Calu3 (cell line): ENCODE measurements at regions of chr1 and their contacts with region 1.

Region 1: GRCh38 chr1:229558571-229559335 is at the start of gene ABCB10:
- DNase-seq: peak; percentile 98
- H3K4me3 Mint-ChIP-seq: peak within 1 kb of the TSS; percentile 92
- H3K27ac Mint-ChIP-seq: peak within 1 kb of the TSS; percentile 66
- H3K4me1 Mint-ChIP-seq: peaks cover 23% of the 10 kb centered on the region
- H3K27me3 Mint-ChIP-seq: no peaks in the 10 kb centered on the region
- CTCF ChIP-seq: peak; percentile 87
- total RNA-seq, gene ABCB10: 18.5 and 19.9 TPM in 2 replicates

Region 2: DNA sequence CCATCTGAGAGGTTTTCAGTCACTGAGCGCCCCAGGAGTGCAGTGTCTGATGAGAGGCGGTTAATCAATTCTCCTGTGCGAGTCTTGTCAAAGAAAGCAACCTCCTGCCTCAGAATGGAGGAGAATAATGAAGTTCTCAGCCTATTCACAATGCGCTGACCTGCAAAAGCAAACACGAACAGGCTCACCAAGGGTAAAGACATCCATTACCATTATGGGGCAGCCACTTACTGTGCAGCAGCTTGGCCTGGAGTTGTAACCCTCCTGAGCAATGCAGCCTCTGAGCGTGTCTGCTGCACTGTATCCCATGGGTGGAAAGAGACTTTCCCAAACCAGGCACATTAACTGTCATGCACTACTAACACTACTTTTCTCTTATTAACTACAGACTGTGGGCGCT is 11.2 kb before region 1 on chr1:
- CTCF ChIA-PET with region 1: no interaction called
- intact Hi-C with region 1: no loop called
- DNase-seq: no peak
- H3K4me3 Mint-ChIP-seq: no peak overlapping the region
- H3K27ac Mint-ChIP-seq: no peak overlapping the region
- H3K4me1 Mint-ChIP-seq: no peaks in the 10 kb centered on the region
- H3K27me3 Mint-ChIP-seq: no peaks in the 10 kb centered on the region
- CTCF ChIP-seq: no peak

Region 3: DNA sequence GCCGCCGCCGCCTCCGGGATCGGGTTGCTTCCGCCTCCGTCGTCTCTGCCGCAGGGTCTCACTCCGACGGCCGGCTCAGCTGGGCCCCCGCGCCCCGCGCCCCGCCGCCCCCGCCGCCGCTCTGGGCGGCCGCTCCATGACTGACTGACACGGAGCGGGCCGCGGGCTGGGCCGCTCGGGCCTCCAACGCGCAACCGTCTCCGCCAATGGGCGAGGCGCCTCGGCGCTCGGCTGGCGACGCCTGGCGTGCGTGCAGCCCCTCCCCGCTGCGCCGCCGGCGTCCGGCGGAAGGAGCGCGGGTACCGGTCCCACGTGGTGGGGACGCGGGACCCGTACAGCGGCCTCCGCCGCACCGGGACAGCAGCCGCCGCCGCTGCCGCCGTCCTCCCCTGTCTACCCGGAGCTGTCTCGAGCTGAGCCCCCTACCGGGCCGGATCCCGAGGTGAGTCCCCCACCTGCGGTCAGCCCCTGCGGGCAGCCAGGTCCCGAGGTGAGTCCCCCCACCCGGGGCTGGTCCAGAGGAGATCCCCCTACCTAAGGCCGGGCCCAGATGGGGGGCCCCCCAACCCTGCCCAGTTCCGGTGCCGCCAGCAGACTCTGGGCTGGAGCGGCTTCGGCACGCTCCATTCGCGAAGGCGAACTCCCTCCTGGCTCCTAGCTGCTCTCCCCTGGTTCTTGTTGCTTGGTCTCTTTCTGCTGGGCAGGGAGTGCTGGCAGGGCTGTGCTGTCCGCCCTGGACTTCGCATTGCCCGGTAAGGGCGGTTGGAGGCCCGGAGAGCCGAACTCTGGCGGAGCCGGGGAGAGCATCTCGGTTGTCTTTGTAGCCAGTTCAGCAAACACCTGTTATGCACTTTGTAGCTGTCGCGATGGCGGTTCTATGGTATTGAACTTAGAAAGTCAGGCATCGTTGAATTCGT is 67.4 kb after region 1 on chr1 and contains the starts of genes TAF5L and URB2:
- CTCF ChIA-PET with region 1: interaction called, 7 read pairs
- intact Hi-C with region 1: loop called (anchors 5 kb)
- DNase-seq: peak; percentile 94
- H3K4me3 Mint-ChIP-seq: peak within 1 kb of the TSS; percentile 82
- H3K27ac Mint-ChIP-seq: peak within 1 kb of the TSS; percentile 86
- H3K4me1 Mint-ChIP-seq: peaks cover 39% of the 10 kb centered on the region
- H3K27me3 Mint-ChIP-seq: no peaks in the 10 kb centered on the region
- CTCF ChIP-seq: no peak
- total RNA-seq, gene TAF5L: 35.8 and 36.3 TPM in 2 replicates
- total RNA-seq, gene URB2: 25.2 and 25.7 TPM in 2 replicates

Region 4: GRCh38 chr1:229848752-229849677 is 290.3 kb after region 1 on chr1:
- CTCF ChIA-PET with region 1: interaction called, 10 read pairs
- intact Hi-C with region 1: no loop called
- DNase-seq: peak; percentile 48
- H3K4me3 Mint-ChIP-seq: no peak overlapping the region
- H3K27ac Mint-ChIP-seq: no peak overlapping the region
- H3K4me1 Mint-ChIP-seq: peaks cover 7% of the 10 kb centered on the region
- H3K27me3 Mint-ChIP-seq: peaks cover 49% of the 10 kb centered on the region
- CTCF ChIP-seq: peak; percentile 75